ENCODE measurements at regions of chr15 and their contacts with region 1.

Region 1: DNA sequence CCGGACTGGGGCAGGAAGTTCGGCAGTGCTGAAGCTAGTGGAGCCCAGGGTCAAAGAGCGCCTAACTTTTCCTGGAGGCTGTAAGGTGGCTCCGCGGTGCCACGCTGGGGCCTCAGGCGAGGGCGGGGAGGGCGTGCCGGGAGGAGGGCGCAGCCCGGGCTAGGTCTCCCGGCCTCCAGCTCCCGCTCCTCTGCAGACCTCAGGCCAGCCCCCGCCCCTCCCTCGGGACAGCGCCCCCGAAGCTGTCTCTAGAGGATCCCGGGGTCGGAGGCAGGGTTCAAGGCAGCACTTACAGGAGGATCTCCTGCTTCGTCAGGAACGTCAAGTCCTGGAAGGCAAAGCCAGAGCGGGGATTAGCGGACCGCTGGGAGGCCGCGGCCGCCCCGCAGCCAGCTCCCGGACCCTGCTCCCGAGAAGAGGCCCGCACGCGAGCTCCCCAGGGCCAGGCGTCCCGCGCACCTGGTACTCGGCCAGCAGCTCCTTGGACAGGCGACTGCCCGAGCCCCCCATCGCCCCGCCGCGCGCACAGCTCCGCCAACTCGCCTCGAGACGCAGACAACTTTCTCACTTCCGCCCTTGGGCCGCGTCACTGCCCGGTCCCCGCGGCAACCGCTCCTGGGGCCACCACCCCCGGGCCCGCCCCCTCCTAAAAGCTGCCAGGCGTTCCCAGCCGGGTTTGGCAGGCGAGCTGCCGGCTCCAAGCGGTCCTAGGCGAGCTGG is at the start of gene CIB1:
- DNase-seq: peak; percentile 87 to 98
- H3K4me3 ChIP-seq: peak within 1 kb of the TSS; percentile 86
- H3K27ac ChIP-seq: peak within 1 kb of the TSS; percentile 74
- H3K4me1 ChIP-seq: peaks cover 57% of the 10 kb centered on the region
- H3K27me3 ChIP-seq: no peaks in the 10 kb centered on the region
- CTCF ChIP-seq: peak; percentile 64; the same call in 1 of the 2 replicates
- total RNA-seq, gene CIB1: 113 and 127 TPM in 2 replicates

Region 2: DNA sequence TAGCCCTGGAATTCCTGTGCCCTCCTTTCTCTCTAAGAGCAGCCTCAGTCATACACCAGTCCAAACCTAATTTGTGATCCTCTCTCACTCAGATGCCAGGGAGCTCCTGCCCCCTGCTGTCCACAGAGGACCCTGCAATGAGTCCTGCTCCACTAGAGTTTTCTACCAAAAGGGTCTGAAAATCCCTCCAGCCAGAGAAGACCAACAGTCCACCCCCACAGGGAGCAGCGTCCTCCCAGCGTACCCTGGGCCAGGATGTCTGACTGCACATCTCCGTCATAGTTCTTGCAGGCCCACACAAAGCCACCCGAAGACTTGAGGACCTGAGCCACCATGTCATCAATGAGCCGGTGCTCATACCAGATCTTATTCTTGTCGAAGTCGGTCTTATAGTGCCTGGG is 146.7 kb before region 1 on chr15:
- CTCF ChIA-PET with region 1: no interaction called
- POLR2A ChIA-PET with region 1: no interaction called
- intact Hi-C with region 1: loop called (anchors 2 kb)
- DNase-seq: peak in 1 of 2 experiments; percentile 47
- H3K4me3 ChIP-seq: no peak overlapping the region
- H3K27ac ChIP-seq: no peak overlapping the region
- H3K4me1 ChIP-seq: no peaks in the 10 kb centered on the region
- H3K27me3 ChIP-seq: no peaks in the 10 kb centered on the region
- CTCF ChIP-seq: peak; percentile 84

Region 3: DNA sequence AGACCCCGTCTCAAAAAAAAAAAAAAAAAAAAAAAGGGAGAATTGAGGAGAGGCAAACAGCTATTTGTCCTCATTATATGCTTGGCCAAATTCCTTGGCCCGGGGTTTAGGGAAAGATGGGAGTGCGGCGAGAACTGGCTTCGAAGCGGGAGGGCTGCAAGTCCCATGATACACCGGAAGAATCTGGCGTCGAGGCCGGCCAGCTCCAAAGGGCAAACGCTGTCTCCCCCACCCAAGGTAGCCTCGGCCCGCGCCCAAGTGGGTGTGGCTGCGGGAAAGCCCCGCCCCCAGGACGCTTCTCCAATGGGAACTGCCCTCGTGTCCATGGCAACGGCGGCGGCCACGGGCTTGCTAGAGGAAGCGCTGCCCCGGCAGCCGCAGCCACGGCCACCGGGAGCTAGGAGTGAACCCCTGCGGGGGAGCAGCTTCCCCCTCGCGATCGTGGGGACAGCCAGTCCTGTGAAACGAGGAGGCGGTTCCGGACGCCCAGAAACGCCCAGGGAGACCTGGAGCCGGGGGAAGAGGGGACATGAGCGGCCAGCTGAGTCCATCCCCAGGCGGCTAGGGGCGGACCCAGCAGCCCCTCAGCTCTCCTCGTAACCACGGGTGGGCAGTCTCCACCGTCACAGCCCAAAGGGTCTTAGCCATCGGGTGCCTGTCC is 15.8 kb after region 1 on chr15 and contains the start of gene TTLL13:
- CTCF ChIA-PET with region 1: interaction called, 3 read pairs
- POLR2A ChIA-PET with region 1: interaction called, 13 read pairs
- intact Hi-C with region 1: no loop called
- DNase-seq: peak; percentile 70 to 88
- H3K4me3 ChIP-seq: peak within 1 kb of the TSS; percentile 75
- H3K27ac ChIP-seq: no peak within 1 kb of the TSS
- H3K4me1 ChIP-seq: 0 out of 2 replicates have a peak, but pooled peaks cover 7% of the 10 kb centered on the region
- H3K27me3 ChIP-seq: no peaks in the 10 kb centered on the region
- CTCF ChIP-seq: no peak
- total RNA-seq, gene TTLL13: 0.93 and 0.96 TPM in 2 replicates

Region 4: DNA sequence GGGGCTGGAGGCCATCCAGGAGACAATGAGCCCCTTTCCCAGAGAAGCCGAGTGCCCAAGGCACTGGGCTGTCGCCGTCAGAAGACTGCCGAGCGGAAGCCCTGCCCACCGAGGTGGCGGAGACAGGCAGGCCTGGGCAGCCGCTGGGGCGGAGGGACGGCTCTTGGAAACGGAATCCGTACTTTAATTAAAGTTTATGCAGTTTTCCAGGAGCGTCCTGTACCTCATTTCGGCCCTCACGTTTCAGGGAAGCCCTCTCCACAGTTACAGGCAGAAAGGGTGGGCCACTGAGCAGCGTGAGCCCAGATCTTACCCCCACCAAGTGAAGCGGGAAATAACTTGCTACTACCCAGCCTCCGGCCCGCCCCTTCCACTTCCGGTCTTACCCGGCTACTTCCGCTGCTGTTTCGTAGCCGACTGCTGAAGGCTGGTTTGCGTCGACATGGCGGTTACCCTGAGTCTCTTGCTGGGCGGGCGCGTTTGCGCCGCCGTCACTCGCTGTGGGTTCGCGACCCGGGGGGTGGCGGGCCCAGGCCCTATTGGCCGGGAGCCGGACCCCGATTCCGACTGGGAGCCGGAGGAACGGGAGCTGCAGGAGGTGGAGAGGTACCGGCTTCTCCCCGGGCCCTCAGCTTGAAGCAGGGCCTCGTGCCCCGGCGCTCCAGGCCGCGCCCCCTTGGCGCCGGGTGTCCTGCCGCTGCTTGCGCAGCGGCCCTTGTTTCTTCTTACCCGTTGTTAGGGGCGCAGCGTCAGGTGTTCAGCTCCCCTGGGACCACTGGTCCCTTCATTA is 31.9 kb after region 1 on chr15 and contains the start of gene NGRN:
- CTCF ChIA-PET with region 1: no interaction called
- POLR2A ChIA-PET with region 1: no interaction called
- intact Hi-C with region 1: loop called (anchors 1 kb)
- DNase-seq: peak; percentile 80 to 85
- H3K4me3 ChIP-seq: peak within 1 kb of the TSS; percentile 82
- H3K27ac ChIP-seq: peak within 1 kb of the TSS; percentile 89
- H3K4me1 ChIP-seq: peaks cover 56% of the 10 kb centered on the region
- H3K27me3 ChIP-seq: no peaks in the 10 kb centered on the region
- CTCF ChIP-seq: no peak
- total RNA-seq, gene NGRN: 57.4 TPM in 2 replicates

Region 5: DNA sequence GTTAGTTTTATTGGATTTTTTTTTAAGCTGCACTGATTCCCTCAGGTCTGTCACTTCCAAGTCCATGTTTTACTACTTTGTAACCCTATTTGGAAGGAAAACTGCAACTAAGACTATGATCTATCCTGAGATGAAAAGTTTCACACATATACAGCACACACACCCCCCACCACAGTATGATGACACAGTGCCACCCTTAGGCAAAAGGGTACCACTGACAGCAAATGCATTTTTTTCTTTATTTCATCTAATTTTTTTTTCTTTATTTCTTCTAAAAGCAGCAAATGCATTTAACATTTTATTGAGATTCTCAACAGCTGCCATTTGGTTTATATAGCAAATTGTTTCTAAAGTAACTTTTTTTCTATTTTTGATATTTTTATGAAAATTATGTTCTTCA is 53.1 kb after region 1 on chr15:
- CTCF ChIA-PET with region 1: interaction called, 3 read pairs
- POLR2A ChIA-PET with region 1: no interaction called
- intact Hi-C with region 1: loop called (anchors 2 kb)
- DNase-seq: peak; percentile 35 to 39
- H3K4me3 ChIP-seq: no peak overlapping the region
- H3K27ac ChIP-seq: no peak overlapping the region
- H3K4me1 ChIP-seq: no peaks in the 10 kb centered on the region
- H3K27me3 ChIP-seq: no peaks in the 10 kb centered on the region
- CTCF ChIP-seq: peak; percentile 66